ENCODE measurements at regions of chr1 and their contacts with region 1.

Region 1: GRCh38 chr1:218480137-218480536 is 135.0 kb downstream of the TGFB2 start:
- DNase-seq: peak; percentile 93
- H3K4me3 ChIP-seq: no peak overlapping the region
- H3K27ac ChIP-seq: peak overlapping the region; percentile 100
- H3K4me1 ChIP-seq: peaks cover 33% of the 10 kb centered on the region
- H3K27me3 ChIP-seq: no peaks in the 10 kb centered on the region
- CTCF ChIP-seq: no peak
- POLR2A ChIP-seq: no peak

Region 2: DNA sequence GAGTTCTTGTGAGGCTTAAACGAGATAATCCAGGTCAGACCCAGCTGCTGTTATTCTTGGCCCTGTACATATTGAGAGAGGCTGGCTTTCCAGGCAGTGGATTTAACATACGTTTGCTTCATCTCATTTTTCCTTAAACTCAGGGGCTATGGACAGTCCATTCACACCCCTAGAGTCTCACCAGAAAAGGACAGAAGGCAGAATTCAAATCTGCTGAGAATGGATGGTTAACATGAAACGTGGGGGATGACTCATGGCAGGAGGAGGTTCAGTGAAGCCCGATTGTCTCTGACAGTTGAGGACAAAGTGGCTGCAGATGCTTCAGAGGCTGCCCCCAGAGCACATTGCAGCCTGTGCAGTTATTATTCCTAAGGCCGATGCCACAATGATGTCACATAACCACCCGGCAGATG is 95.5 kb before region 1 on chr1:
- CTCF ChIA-PET with region 1: no interaction called
- POLR2A ChIA-PET with region 1: no interaction called
- dilution Hi-C with region 1: no loop called
- intact Hi-C with region 1: loop called (anchors 1 kb)
- DNase-seq: peak; percentile 68
- H3K4me3 ChIP-seq: no peak overlapping the region
- H3K27ac ChIP-seq: peak overlapping the region; percentile 38
- H3K4me1 ChIP-seq: peaks cover 22% of the 10 kb centered on the region
- H3K27me3 ChIP-seq: no peaks in the 10 kb centered on the region
- CTCF ChIP-seq: no peak
- POLR2A ChIP-seq: no peak

Region 3: DNA sequence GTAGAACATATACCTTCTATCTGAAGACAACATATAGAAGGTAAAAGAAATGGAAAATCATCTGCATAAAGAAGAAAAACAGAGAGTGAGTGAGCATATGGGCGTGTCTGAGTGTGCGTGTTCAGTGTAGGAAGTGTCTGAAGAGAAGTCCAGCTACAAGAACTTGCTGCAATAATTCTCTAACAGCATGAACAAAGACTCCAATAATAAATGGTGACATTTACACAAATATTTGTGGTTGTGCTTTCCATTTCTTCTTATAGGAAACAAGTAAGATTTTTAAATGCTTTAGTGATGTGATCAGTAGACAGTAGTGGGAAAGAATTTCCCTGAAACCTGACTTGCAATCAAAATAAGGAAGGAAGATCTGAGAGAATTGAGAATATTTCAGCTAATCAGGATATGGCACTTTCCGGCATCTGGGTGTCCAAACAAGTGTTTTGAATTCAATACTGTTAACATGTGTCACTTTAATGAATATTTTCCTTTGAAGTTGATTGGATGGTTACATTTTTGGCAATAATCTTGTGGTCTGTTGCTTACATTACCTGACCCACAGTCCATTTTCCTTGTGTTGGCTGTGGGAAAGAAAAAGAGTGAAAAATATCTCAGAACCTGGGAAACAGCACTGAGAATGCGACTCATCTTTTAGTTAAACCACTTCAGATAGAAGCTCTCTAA is 19.0 kb after region 1 on chr1:
- CTCF ChIA-PET with region 1: interaction called, 5 read pairs
- POLR2A ChIA-PET with region 1: interaction called, 3 read pairs
- dilution Hi-C with region 1: no loop called
- intact Hi-C with region 1: loop called (anchors 1 kb)
- DNase-seq: peak; percentile 83
- H3K4me3 ChIP-seq: peak overlapping the region in 1 of 3 experiments; percentile 60
- H3K27ac ChIP-seq: peak overlapping the region; percentile 93
- H3K4me1 ChIP-seq: peaks cover 29% of the 10 kb centered on the region
- H3K27me3 ChIP-seq: no peaks in the 10 kb centered on the region
- CTCF ChIP-seq: no peak
- POLR2A ChIP-seq: no peak

Region 4: GRCh38 chr1:218592688-218593087 is 112.6 kb after region 1 on chr1:
- CTCF ChIA-PET with region 1: no interaction called
- POLR2A ChIA-PET with region 1: no interaction called
- dilution Hi-C with region 1: no loop called
- intact Hi-C with region 1: loop called (anchors 1 kb)
- DNase-seq: peak; percentile 94
- H3K4me3 ChIP-seq: peak overlapping the region in 1 of 3 experiments; percentile 7
- H3K27ac ChIP-seq: peak overlapping the region; percentile 68
- H3K4me1 ChIP-seq: peaks cover 19% of the 10 kb centered on the region
- H3K27me3 ChIP-seq: no peaks in the 10 kb centered on the region
- CTCF ChIP-seq: no peak
- POLR2A ChIP-seq: peak; percentile 42

Region 5: DNA sequence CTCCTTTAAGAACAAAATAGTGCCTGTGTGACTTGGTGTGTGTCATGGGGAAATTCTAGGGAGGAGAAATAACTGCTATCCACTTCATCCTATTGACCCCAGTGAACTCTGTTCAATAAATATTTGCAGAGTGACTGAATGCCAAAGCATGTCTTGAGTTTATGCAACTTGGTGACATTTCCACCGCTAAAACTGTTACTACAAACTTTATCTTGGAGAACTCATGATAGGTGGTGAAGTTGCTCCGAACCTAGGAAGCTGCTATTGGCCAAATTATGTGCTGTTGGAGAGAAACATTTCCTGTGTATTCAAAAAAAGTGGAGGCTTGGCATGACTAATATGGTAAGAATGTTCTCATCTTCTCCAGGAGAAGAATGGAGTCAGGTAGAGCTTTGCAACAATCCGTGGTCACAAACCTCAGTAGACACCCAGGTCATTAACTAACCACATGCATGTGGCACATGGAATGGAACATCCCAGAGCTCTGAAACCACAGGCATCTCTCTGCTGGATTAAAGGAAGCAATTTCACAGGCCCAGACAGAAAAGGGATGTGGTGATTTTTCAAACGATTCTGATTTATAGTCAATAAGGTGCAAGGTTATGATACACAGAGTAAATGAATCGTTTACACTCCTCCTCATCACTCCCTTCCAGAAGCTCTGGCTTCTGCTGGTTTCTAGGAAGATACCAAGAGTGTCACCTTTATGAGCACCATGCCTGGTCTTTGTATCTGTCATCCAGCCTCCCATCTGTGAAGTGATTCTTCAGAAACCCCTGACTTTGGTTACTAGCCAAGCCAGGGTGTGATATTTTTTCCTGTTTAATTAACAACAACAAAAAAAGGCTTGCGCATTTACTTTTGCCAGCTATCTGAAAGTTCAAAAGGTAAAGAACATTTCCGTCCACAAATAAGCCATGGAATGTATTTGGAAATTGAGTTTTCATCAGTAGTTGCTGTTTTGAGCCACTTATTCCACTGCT is 226.1 kb after region 1 on chr1:
- CTCF ChIA-PET with region 1: no interaction called
- POLR2A ChIA-PET with region 1: no interaction called
- dilution Hi-C with region 1: no loop called
- intact Hi-C with region 1: loop called (anchors 1 kb)
- DNase-seq: peak; percentile 74
- H3K4me3 ChIP-seq: no peak overlapping the region
- H3K27ac ChIP-seq: peak overlapping the region; percentile 86
- H3K4me1 ChIP-seq: peaks cover 26% of the 10 kb centered on the region
- H3K27me3 ChIP-seq: no peaks in the 10 kb centered on the region
- CTCF ChIP-seq: no peak
- POLR2A ChIP-seq: no peak

Region 6: DNA sequence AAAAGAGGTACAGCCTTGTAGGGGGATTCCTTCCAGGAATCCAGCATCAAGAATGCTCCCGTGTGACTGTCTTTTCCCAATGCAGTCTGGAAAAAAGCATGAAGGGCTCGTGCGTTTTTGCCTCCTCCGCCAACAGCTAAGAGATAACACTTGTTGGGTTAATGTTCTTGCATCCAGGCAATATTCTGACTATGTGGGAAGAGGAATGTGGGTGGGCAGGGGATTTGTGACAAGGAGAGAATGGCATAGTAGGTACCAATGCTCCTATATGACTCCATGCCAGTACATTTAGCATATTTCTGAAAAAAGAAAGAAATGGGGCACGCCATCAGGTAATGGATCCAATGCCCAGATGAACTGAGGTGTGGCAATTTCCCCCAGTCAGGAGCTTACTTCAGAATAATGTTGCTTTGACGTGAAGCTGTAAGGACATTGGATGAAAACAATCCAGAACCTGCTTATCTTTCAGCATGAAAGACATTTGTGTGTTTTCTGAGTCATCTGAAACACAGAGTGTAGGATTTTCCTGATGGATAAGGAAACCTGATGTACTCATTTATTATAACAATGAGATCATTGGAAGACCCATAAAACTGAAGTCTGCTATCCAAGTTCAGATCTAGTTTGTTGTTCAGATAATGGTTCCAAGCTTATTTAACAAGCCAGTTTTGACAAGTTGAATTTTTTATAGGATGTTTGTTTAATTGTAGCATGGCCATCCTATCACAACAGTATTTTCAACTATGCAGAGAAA is 799.1 kb after region 1 on chr1:
- CTCF ChIA-PET with region 1: no interaction called
- POLR2A ChIA-PET with region 1: no interaction called
- dilution Hi-C with region 1: no loop called
- intact Hi-C with region 1: loop called (anchors 1 kb)
- DNase-seq: peak; percentile 87
- H3K4me3 ChIP-seq: no peak overlapping the region
- H3K27ac ChIP-seq: peak overlapping the region; percentile 64
- H3K4me1 ChIP-seq: peaks cover 28% of the 10 kb centered on the region
- H3K27me3 ChIP-seq: no peaks in the 10 kb centered on the region
- CTCF ChIP-seq: no peak
- POLR2A ChIP-seq: no peak

Measured in endothelial cell of umbilical vein (primary cell).